Stomach (tissue), 19 donors: ENCODE measurements at regions of chr11 and their contacts with region 1.

Region 1: GRCh38 chr11:56783448-56784041 is 35.0 kb upstream of the OR9G4 start:
- DNase-seq: peak in 1 of 2 donors; percentile 72
- H3K4me3 ChIP-seq: no peak overlapping the region
- H3K27ac ChIP-seq: no peak overlapping the region
- H3K4me1 ChIP-seq: no peaks in the 10 kb centered on the region
- H3K27me3 ChIP-seq: no peaks in the 10 kb centered on the region
- CTCF ChIP-seq: peak in 3 of 7 experiments; percentile 35 to 43 (median 42)
- EP300 ChIP-seq: no peak
- POLR2A ChIP-seq: no peak

Region 2: GRCh38 chr11:55942785-55943392 is 840.7 kb before region 1 on chr11:
- intact Hi-C with region 1: loop called (anchors 10 kb)
- DNase-seq: peak in 1 of 2 donors; percentile 73
- H3K4me3 ChIP-seq: no peak overlapping the region
- H3K27ac ChIP-seq: no peak overlapping the region
- H3K4me1 ChIP-seq: no peaks in the 10 kb centered on the region
- H3K27me3 ChIP-seq: no peaks in the 10 kb centered on the region
- CTCF ChIP-seq: peak in 3 of 7 experiments; percentile 24 to 28 (median 26)
- EP300 ChIP-seq: no peak
- POLR2A ChIP-seq: no peak

Region 3: GRCh38 chr11:56841210-56841810 is 57.8 kb after region 1 on chr11:
- intact Hi-C with region 1: no loop called
- DNase-seq: peak; percentile 58 to 89
- H3K4me3 ChIP-seq: no peak overlapping the region
- H3K27ac ChIP-seq: no peak overlapping the region
- H3K4me1 ChIP-seq: peaks cover 0 to 8% (median 6%) of the 10 kb centered on the region in 4 donors
- H3K27me3 ChIP-seq: no peaks in the 10 kb centered on the region
- CTCF ChIP-seq: peak in 5 of 7 experiments; percentile 56 to 72 (median 68)
- EP300 ChIP-seq: no peak
- POLR2A ChIP-seq: no peak

Region 4: DNA sequence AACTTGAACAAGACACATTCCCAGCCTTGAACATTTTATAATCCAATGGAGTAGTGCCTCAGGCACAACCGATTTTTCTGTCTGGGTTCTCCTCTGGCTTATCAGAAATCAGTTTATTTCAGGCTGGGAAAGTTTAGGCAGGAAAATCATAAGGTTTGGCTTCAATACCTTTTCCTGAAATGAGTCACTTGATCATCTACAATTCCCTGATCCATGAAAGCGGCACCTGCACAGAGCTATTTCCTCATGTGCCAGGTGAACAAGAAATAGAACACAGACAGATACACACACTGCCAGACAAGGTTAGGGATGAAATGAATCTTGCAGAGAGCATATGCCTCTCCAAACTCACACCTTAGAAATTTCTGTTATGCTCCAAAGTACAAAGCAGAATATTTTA is 71.7 kb after region 1 on chr11:
- intact Hi-C with region 1: no loop called
- DNase-seq: peak in 1 of 2 donors; percentile 33
- H3K4me3 ChIP-seq: no peak overlapping the region
- H3K27ac ChIP-seq: peak overlapping the region in 2 of 5 donors; percentile 37 to 45
- H3K4me1 ChIP-seq: peaks cover 0 to 7% (median 0%) of the 10 kb centered on the region in 4 donors
- H3K27me3 ChIP-seq: no peaks in the 10 kb centered on the region
- CTCF ChIP-seq: no peak
- EP300 ChIP-seq: no peak
- POLR2A ChIP-seq: no peak

Region 5: DNA sequence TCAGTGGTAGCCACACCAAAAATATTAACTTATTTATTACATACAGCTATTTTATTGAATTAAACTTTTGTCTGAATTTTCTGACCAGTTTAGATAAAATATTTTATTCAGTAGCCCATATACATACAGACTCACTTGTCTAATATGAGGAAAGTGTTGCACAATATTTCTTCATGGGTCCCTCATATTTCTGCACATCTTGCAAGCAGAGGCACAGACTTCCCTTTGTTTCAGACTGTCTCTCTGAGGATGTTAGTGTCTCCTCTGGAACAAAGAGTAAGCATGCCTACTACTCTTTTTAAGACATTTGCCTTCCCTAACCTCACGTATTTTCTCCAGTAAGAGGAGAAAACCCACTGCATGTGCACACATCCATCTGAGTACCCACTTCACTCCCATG is 286.4 kb after region 1 on chr11:
- intact Hi-C with region 1: no loop called
- DNase-seq: no peak
- H3K4me3 ChIP-seq: no peak overlapping the region
- H3K27ac ChIP-seq: no peak overlapping the region
- H3K4me1 ChIP-seq: peaks cover 0 to 11% (median 5%) of the 10 kb centered on the region in 4 donors
- H3K27me3 ChIP-seq: no peaks in the 10 kb centered on the region
- CTCF ChIP-seq: no peak
- EP300 ChIP-seq: no peak
- POLR2A ChIP-seq: no peak